ENCODE measurements at regions of chr18 and their contacts with region 1.

Region 1: DNA sequence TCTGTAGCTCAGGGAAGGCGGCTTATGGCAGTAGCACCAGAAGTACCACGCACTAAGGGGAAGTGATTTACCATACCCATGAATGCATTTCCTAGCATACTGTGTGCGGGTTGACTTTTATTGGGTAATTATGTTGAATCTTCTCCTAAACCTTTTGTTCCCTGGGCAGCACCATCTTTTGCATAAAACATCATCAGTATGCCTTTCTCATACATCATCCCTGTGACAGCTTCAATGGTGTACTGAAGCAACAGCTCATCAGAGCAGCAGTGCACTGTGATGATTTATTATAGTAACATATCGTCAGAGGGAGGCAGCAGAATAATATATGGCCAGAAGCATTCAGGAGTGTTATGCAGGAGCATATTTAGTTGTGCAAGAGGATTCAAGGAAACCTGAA is 204.9 kb downstream of the CDH7 start:
- DNase-seq: no peak
- ATAC-seq: no peak
- H3K4me3 ChIP-seq: no peak overlapping the region
- H3K27ac ChIP-seq: no peak overlapping the region
- H3K4me1 ChIP-seq: no peaks in the 10 kb centered on the region
- H3K27me3 ChIP-seq: no peaks in the 10 kb centered on the region
- CTCF ChIP-seq: no peak

Region 2: GRCh38 chr18:64444819-64445218 is 1510.9 kb before region 1 on chr18:
- intact Hi-C with region 1: no loop called
- DNase-seq: no peak
- ATAC-seq: no peak
- H3K4me3 ChIP-seq: no peak overlapping the region
- H3K27ac ChIP-seq: no peak overlapping the region
- H3K4me1 ChIP-seq: no peaks in the 10 kb centered on the region
- H3K27me3 ChIP-seq: no peaks in the 10 kb centered on the region
- CTCF ChIP-seq: no peak

Region 3: GRCh38 chr18:65897292-65897691 is 58.5 kb before region 1 on chr18:
- intact Hi-C with region 1: loop called in 1 of 10 experiments (anchors 10 kb)
- DNase-seq: no peak
- ATAC-seq: no peak
- H3K4me3 ChIP-seq: no peak overlapping the region
- H3K27ac ChIP-seq: no peak overlapping the region
- H3K4me1 ChIP-seq: no peaks in the 10 kb centered on the region
- H3K27me3 ChIP-seq: no peaks in the 10 kb centered on the region
- CTCF ChIP-seq: no peak

Region 4: DNA sequence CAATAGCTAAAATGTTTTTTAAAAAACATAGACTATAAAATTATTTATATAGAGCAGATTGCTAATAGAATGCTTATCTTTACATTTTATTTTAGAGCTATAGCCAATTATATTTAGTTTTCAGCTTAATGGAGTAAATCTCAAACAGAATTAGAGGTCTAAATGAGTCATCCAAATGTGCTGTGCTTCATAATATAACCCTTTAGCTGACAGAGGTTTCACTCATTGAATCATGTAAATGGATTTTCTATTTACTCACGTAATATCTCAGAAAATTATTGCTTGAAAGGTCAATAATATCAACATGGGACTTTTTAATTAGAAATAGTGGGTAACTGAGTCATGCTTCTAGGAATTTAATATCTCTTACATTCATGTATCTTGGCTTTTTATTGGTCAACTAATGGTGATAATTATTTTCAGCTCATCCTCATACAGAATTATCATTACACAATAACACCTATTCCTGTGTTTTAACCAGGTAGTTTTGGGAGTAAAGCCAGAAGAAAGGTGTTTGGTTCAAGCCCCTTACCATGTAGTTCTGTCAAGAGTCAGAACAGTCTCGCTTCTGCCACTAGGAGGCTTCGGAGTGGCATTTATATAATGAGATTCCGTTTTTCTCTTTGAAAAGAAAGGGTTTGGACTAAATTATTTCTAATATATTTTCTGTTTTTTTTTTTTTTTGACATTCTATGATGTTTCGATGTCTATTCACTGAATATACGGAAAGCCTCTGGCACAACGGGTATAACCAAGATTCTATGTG is 12.7 kb after region 1 on chr18:
- intact Hi-C with region 1: loop called in 1 of 10 experiments (anchors 1 kb)
- DNase-seq: no peak
- ATAC-seq: no peak
- H3K4me3 ChIP-seq: no peak overlapping the region
- H3K27ac ChIP-seq: no peak overlapping the region
- H3K4me1 ChIP-seq: no peaks in the 10 kb centered on the region
- H3K27me3 ChIP-seq: no peaks in the 10 kb centered on the region
- CTCF ChIP-seq: peak in 6 of 9 donors; percentile 17 to 41 (median 28)

Region 5: DNA sequence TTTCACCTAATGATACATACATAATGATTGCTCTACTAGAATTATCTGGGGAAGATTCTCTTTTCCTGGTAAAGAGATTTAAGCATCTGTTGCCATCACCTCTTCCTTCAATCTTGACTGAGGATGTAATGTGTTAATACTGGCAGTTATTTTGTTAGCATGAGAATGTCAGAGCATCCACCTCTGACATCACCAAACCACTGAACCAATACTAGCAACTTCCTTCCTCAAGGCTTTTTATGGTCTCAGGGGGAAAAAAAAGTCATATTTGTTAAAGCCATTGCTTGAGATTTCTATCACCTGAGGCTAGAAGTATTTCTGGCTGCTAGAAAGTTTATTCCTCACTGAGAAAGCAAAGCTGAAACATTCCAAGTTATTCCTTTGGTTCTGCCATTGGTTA is 1512.3 kb after region 1 on chr18:
- intact Hi-C with region 1: no loop called
- DNase-seq: no peak
- ATAC-seq: no peak
- H3K4me3 ChIP-seq: no peak overlapping the region
- H3K27ac ChIP-seq: no peak overlapping the region
- H3K4me1 ChIP-seq: no peaks in the 10 kb centered on the region
- H3K27me3 ChIP-seq: no peaks in the 10 kb centered on the region
- CTCF ChIP-seq: no peak

Measured in heart right ventricle (tissue), 16 donors.